Body of pancreas (tissue), 4 donors: ENCODE measurements at regions of chr6 and their contacts with region 1.

Region 1: DNA sequence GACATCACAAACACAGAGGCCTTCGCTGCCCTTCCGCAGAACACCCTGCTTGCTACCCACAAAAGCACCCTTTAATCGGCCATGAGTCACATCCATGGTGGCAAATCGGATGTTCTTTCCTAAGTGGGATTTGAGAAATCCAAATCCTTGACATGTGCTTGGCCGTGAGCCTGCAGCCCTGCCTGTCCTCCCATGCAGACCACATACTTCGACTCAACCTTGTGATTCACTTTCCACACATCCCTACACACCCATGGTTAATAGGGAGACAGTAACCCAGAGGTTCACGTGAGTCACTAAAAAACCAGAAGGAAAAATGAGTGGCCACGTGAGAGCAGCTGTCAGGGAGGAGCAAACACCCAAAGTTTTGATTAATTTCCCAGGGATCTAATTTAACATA is 19.4 kb downstream of the RAMACL start:
- DNase-seq: no peak
- ATAC-seq: no peak
- H3K4me3 ChIP-seq: no peak overlapping the region
- H3K27ac ChIP-seq: no peak overlapping the region
- H3K4me1 ChIP-seq: peaks cover under 1% of the 10 kb centered on the region
- H3K27me3 ChIP-seq: no peaks in the 10 kb centered on the region
- CTCF ChIP-seq: no peak
- POLR2A ChIP-seq: no peak

Region 2: DNA sequence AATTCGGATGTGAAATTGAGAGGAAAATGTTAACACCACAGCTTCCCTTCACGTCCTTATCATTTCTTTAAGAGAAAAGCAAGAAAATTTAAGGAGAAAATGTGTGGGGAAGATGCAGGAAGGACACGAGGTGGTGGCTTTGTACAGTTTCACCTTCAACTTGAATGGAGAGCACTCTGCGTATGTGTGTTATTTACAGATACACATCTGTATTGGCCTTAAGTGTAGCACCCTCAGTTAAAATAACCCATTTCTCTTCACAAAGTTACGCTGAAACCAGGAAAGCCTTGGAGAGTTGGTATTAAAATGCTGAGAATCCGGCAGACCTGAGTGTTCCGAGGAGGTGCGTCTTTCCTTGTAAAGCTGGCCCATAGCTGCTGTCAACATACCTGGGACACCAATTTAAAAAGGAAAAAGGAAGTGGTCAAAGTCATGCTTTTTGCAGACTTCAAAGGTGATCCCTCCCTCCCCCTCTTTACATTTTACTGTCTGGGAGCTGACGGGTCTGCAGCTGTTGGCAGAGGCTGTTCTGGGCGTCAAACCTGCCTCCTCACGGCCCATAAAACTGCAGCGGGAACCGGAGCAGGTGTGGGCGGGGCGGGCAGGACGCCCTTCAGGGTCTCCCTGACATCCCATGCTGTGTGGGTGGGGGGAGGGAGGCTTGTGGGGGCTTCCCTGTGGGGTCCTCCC is 338.1 kb before region 1 on chr6:
- intact Hi-C with region 1: no loop called
- DNase-seq: no peak
- ATAC-seq: no peak
- H3K4me3 ChIP-seq: no peak overlapping the region
- H3K27ac ChIP-seq: no peak overlapping the region
- H3K4me1 ChIP-seq: no peaks in the 10 kb centered on the region
- H3K27me3 ChIP-seq: no peaks in the 10 kb centered on the region
- CTCF ChIP-seq: no peak
- POLR2A ChIP-seq: no peak

Region 3: GRCh38 chr6:166619912-166620311 is 52.8 kb after region 1 on chr6:
- intact Hi-C with region 1: loop called (anchors 10 kb)
- DNase-seq: peak in 3 of 4 donors; percentile 28 to 62 (median 60)
- ATAC-seq: peak; percentile 73
- H3K4me3 ChIP-seq: no peak overlapping the region
- H3K27ac ChIP-seq: peak overlapping the region; percentile 60 to 72 (median 66)
- H3K4me1 ChIP-seq: peaks cover 48% of the 10 kb centered on the region
- H3K27me3 ChIP-seq: no peaks in the 10 kb centered on the region
- CTCF ChIP-seq: no peak
- POLR2A ChIP-seq: no peak